Caco-2 (cell line): ENCODE measurements at regions of chr1 and their contacts with region 1.

Region 1: DNA sequence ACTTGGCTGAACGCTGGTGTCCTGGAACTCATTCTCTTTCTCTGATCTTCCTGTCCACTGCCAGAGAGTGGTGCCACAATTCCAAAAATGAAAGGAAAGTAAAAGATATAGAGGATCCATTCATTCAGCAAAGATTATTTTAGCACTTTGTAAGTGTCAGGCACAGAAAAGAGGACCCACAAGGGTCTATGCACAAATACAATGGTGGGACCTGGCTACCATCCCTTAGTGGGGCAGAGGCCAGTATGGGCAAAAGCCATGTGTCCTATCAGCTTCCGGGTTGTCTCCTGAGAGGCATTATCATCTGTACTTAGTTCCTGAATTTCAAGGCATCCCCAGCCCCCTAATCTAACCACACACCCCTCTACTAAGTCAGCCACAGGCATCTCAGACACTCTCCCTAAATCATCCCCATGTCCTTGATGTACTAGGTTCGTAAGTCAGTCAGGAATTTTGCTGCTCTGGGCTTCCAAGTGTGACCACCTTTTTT is 19.0 kb downstream of the SSR2 start:
- DNase-seq: no peak
- H3K4me3 ChIP-seq: no peak overlapping the region
- H3K4me3 Mint-ChIP-seq: no peak overlapping the region
- H3K27ac Mint-ChIP-seq: no peak overlapping the region
- H3K4me1 ChIP-seq: peaks cover 7% of the 10 kb centered on the region
- H3K4me1 Mint-ChIP-seq: peaks cover 10% of the 10 kb centered on the region
- H3K27me3 ChIP-seq: no peaks in the 10 kb centered on the region; the same call in 1 of the 2 replicates
- H3K27me3 Mint-ChIP-seq: no peaks in the 10 kb centered on the region
- CTCF ChIP-seq: no peak

Region 2: DNA sequence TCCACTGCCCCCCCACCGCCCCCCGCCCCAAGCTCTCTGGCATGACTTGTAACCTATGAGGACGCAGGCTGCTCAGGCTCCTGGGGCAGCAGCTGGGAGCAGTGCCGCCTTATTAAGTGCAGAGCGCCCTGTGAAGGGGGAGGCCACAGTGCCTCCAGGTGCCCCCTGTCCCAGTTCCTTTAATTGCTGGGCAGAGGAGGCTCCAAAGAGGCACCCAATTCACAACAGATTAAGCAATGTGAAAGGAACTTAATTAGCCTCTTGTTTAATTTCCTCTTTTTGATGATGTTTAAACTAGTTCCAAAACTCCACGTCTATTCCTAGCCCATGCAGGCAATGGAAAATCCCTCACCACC is 57.3 kb before region 1 on chr1:
- CTCF ChIA-PET with region 1: no interaction called
- POLR2A ChIA-PET with region 1: no interaction called
- intact Hi-C with region 1: no loop called
- DNase-seq: no peak
- H3K4me3 ChIP-seq: no peak overlapping the region
- H3K4me3 Mint-ChIP-seq: no peak overlapping the region
- H3K27ac Mint-ChIP-seq: peak overlapping the region; percentile 65
- H3K4me1 ChIP-seq: peaks cover 18% of the 10 kb centered on the region
- H3K4me1 Mint-ChIP-seq: peaks cover 19% of the 10 kb centered on the region
- H3K27me3 ChIP-seq: no peaks in the 10 kb centered on the region
- H3K27me3 Mint-ChIP-seq: no peaks in the 10 kb centered on the region
- CTCF ChIP-seq: no peak

Region 3: GRCh38 chr1:156042828-156043227 is 41.1 kb after region 1 on chr1:
- CTCF ChIA-PET with region 1: interaction called, 10 read pairs
- POLR2A ChIA-PET with region 1: no interaction called
- intact Hi-C with region 1: no loop called
- DNase-seq: no peak
- H3K4me3 ChIP-seq: no peak overlapping the region
- H3K4me3 Mint-ChIP-seq: no peak overlapping the region
- H3K27ac Mint-ChIP-seq: no peak overlapping the region
- H3K4me1 ChIP-seq: peaks cover 24% of the 10 kb centered on the region
- H3K4me1 Mint-ChIP-seq: peaks cover 7% of the 10 kb centered on the region
- H3K27me3 ChIP-seq: no peaks in the 10 kb centered on the region
- H3K27me3 Mint-ChIP-seq: no peaks in the 10 kb centered on the region
- CTCF ChIP-seq: no peak

Region 4: DNA sequence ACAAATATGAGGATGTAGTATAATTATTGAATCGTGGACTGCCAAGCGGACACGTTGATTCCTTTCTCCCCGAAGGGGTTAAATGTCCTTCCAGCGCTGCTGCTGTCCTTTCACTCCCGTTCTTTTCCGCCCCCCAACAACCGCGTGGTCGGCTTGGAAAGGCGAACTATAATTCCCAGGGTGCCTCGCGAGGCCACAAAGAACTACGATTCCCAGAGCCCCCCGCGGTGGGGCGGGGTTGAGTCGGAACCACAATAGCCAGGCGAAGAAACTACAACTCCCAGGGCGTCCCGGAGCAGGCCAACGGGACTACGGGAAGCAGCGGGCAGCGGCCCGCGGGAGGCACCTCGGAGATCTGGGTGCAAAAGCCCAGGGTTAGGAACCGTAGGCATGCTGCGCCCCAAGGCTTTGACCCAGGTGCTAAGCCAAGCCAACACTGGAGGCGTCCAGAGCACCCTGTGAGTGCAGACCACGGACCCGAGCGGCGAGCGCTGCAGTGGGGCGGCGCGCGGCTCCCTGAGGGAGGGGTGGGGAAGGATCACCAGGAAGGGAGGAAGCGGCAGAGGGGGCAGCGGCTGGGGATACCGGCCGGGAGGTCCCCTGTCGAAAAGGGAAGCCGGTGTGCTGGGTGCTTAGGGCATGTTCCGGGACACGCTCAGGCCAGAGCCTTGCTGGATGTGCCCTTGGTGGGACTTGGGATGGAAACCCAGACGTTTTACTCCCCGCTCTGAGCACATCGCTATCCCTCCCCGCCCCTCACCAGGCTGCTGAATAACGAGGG is 53.0 kb after region 1 on chr1 and contains the start of gene LAMTOR2:
- CTCF ChIA-PET with region 1: no interaction called
- POLR2A ChIA-PET with region 1: no interaction called
- intact Hi-C with region 1: no loop called
- DNase-seq: peak; percentile 98
- H3K4me3 ChIP-seq: peak within 1 kb of the TSS; percentile 86
- H3K4me3 Mint-ChIP-seq: peak within 1 kb of the TSS; percentile 98
- H3K27ac Mint-ChIP-seq: peak within 1 kb of the TSS; percentile 91
- H3K4me1 ChIP-seq: peaks cover 14% of the 10 kb centered on the region
- H3K4me1 Mint-ChIP-seq: no peaks in the 10 kb centered on the region
- H3K27me3 ChIP-seq: no peaks in the 10 kb centered on the region
- H3K27me3 Mint-ChIP-seq: no peaks in the 10 kb centered on the region
- CTCF ChIP-seq: peak in 1 of 2 experiments; percentile 5
- total RNA-seq, gene LAMTOR2: 49.4 and 49.5 TPM in 2 replicates

Region 5: DNA sequence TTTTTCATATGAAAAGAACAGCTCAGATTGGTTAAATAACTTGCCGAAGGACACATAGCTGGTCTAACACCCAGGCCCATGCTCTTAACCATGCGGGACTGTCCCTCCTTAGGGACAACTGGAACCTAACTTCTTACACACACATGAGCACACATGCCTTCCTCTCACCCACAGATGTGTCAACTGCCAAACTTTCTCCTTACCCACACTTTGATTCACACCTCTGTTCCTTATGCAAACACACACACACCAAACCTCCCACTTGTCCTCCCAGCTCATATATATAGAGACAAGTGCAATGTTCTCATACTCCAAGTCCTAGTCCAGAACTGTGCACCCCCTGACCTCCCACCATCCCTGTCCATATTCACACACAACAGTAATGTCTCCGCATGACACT is 63.5 kb after region 1 on chr1:
- CTCF ChIA-PET with region 1: interaction called, 3 read pairs
- POLR2A ChIA-PET with region 1: no interaction called
- intact Hi-C with region 1: loop called (anchors 5 kb)
- DNase-seq: no peak
- H3K4me3 ChIP-seq: no peak overlapping the region
- H3K4me3 Mint-ChIP-seq: no peak overlapping the region
- H3K27ac Mint-ChIP-seq: no peak overlapping the region
- H3K4me1 ChIP-seq: no peaks in the 10 kb centered on the region
- H3K4me1 Mint-ChIP-seq: peaks cover 8% of the 10 kb centered on the region
- H3K27me3 ChIP-seq: no peaks in the 10 kb centered on the region
- H3K27me3 Mint-ChIP-seq: no peaks in the 10 kb centered on the region
- CTCF ChIP-seq: no peak